Panc1 (cell line): ENCODE measurements at regions of chr6 and their contacts with region 1.

Region 1: GRCh38 chr6:16332175-16332542 is 93.8 kb downstream of the GMPR start:
- DNase-seq: no peak
- ATAC-seq: peak; percentile 91
- H3K4me3 ChIP-seq: no peak overlapping the region
- H3K27ac ChIP-seq: peak overlapping the region; percentile 55; the same call in 1 of the 2 replicates
- H3K4me1 ChIP-seq: peaks cover 12% of the 10 kb centered on the region
- H3K27me3 ChIP-seq: no peaks in the 10 kb centered on the region
- CTCF ChIP-seq: peak; percentile 83

Region 2: GRCh38 chr6:16409531-16410441 is 77.6 kb after region 1 on chr6:
- CTCF ChIA-PET with region 1: interaction called, 3 read pairs
- POLR2A ChIA-PET with region 1: no interaction called
- in situ Hi-C with region 1: no loop called
- intact Hi-C with region 1: loop called (anchors 2 kb)
- DNase-seq: peak; percentile 36
- ATAC-seq: peak; percentile 88
- H3K4me3 ChIP-seq: no peak overlapping the region
- H3K27ac ChIP-seq: no peak overlapping the region
- H3K4me1 ChIP-seq: no peaks in the 10 kb centered on the region
- H3K27me3 ChIP-seq: no peaks in the 10 kb centered on the region
- CTCF ChIP-seq: peak; percentile 90

Region 3: GRCh38 chr6:16723826-16724225 is 391.7 kb after region 1 on chr6:
- CTCF ChIA-PET with region 1: no interaction called
- POLR2A ChIA-PET with region 1: no interaction called
- in situ Hi-C with region 1: no loop called
- intact Hi-C with region 1: loop called (anchors 5 kb)
- DNase-seq: peak; percentile 78
- ATAC-seq: peak; percentile 41; the same call in 1 of the 2 replicates
- H3K4me3 ChIP-seq: peak overlapping the region in 1 of 2 experiments; percentile 6; a peak in 1 of 4 replicates
- H3K27ac ChIP-seq: peak overlapping the region; percentile 99
- H3K4me1 ChIP-seq: peaks cover 94% of the 10 kb centered on the region
- H3K27me3 ChIP-seq: no peaks in the 10 kb centered on the region
- CTCF ChIP-seq: no peak